Activated CD8-positive, alpha-beta memory T cell treated with anti-CD3 and anti-CD28 coated beads, Interleukin-2, amount 10 ng/mL, durations not matched to agents 7 days and 5 days (primary cell): ENCODE measurements at regions of chr1 and their contacts with region 1.

Region 1: DNA sequence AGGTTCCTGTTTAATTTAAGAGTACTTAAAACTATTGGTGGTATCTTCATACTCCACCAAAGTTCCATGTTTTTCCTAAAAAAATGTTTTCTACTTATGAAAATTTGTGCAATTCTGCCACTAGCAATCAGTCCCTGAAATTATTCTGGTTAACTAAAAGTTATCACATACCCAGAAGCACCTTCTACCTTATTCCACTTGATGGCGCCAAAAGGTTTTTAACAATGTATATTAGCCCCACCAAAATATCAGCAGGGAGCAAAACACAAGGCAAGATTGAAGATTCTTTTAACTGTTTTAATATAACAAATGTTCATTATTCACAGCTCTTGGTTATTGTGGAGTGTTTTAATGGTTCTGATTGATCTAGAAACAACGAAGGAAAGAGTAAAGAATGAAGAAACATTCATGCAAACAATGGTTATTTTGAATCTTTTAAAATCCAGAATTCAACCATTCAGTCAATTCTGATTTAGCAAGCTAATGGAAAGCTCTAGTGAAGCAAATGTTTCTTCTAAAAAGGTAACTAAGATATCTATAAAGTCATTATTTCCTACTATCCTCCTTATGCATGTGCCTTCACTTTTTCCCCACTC is 67.2 kb downstream of the TTLL7 start:
- DNase-seq: no peak
- ATAC-seq: peak; percentile 80
- H3K4me3 Mint-ChIP-seq: no peak overlapping the region
- H3K27ac Mint-ChIP-seq: no peak overlapping the region
- H3K4me1 Mint-ChIP-seq: no peaks in the 10 kb centered on the region
- H3K27me3 Mint-ChIP-seq: peaks cover 10% of the 10 kb centered on the region

Region 2: GRCh38 chr1:83864991-83865390 is 66.8 kb before region 1 on chr1:
- CTCF ChIA-PET with region 1: no interaction called
- DNase-seq: no peak
- ATAC-seq: no peak
- H3K4me3 Mint-ChIP-seq: no peak overlapping the region
- H3K27ac Mint-ChIP-seq: no peak overlapping the region
- H3K4me1 Mint-ChIP-seq: peaks cover 8% of the 10 kb centered on the region
- H3K27me3 Mint-ChIP-seq: peaks cover 11% of the 10 kb centered on the region

Region 3: DNA sequence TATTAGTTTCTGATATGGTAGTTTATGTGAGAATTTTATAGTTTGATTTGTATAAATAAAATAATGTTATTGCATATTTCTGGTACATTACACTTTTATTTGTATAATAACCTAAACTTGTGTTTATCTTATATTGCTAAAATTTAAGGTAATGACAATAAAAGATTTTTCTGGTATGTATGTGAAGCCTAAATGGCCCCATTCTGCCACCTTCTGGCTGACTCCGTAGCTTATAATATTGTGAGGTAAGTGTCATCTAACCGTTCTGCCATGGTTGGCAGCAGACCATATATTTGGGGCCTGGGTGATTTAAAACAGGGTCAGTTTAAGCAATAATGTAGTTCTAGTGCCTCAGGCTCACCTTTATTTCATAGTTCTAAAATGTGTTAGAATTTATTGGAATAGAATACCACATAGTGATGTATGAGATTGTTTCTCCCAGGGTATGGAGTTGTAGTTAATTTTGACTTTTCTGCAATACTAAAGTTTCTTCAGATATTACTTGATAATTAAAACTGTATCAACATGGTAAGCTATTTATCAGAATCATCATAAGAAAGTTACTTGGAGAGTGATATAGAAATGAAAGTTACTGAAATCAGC is 191.1 kb after region 1 on chr1:
- CTCF ChIA-PET with region 1: interaction called, 15 read pairs
- DNase-seq: peak; percentile 69
- ATAC-seq: peak; percentile 75
- H3K4me3 Mint-ChIP-seq: no peak overlapping the region
- H3K27ac Mint-ChIP-seq: no peak overlapping the region
- H3K4me1 Mint-ChIP-seq: no peaks in the 10 kb centered on the region
- H3K27me3 Mint-ChIP-seq: no peaks in the 10 kb centered on the region